HepG2 (cell line): ENCODE measurements at regions of chr11 and their contacts with region 1.

Region 1: DNA sequence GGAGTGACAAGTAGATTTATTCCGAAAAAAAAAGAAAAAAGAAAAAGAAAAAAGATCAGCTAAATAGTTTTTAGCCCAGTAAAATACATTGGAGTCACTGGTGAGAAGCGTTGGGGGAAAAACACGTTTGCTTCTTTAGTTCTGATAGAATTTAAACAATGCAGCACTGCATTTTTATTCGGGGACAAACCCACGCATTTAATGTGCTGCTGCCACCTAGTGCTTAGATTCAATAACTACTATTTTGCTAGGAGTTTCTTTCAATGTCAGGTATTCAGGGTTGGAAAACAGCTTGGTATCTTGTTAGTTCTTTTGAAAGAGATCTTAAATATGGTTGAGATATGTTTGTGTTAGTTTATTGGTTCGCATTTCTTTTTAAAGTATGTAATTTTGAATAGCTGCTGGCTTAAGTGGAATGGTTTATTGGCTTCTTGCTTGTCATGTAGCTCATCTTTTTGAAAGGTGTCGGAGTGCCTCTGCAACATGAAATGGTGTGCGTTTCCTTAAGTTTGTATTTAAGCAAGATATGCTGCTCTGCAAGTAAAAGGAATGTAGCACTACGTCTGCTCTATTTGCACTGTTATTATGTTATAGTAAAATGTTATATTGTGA is 41.9 kb downstream of the SVIP start:
- DNase-seq: peak; percentile 45
- ATAC-seq: peak; percentile 63
- H3K4me3 ChIP-seq: no peak overlapping the region
- H3K27ac ChIP-seq: no peak overlapping the region
- H3K4me1 ChIP-seq: peaks cover 15% of the 10 kb centered on the region
- H3K27me3 ChIP-seq: no peaks in the 10 kb centered on the region
- CTCF ChIP-seq: peak; percentile 73
- EP300 ChIP-seq: no peak
- POLR2A ChIP-seq: no peak
- RAD21 ChIP-seq: peak; percentile 48

Region 2: GRCh38 chr11:22539821-22540256 is 247.8 kb before region 1 on chr11:
- CTCF ChIA-PET with region 1: no interaction called
- POLR2A ChIA-PET with region 1: no interaction called
- in situ Hi-C with region 1: no loop called
- intact Hi-C with region 1: loop called (anchors 1 kb)
- DNase-seq: peak; percentile 9
- ATAC-seq: peak; percentile 76
- H3K4me3 ChIP-seq: no peak overlapping the region
- H3K27ac ChIP-seq: no peak overlapping the region
- H3K4me1 ChIP-seq: no peaks in the 10 kb centered on the region
- H3K27me3 ChIP-seq: no peaks in the 10 kb centered on the region
- CTCF ChIP-seq: peak; percentile 52
- EP300 ChIP-seq: no peak
- POLR2A ChIP-seq: no peak
- RAD21 ChIP-seq: no peak

Region 3: GRCh38 chr11:22634897-22635629 is 152.6 kb before region 1 on chr11:
- CTCF ChIA-PET with region 1: interaction called, 4 read pairs
- POLR2A ChIA-PET with region 1: interaction called, 4 read pairs
- in situ Hi-C with region 1: no loop called
- intact Hi-C with region 1: loop called (anchors 1 kb)
- DNase-seq: peak; percentile 96
- ATAC-seq: peak; percentile 97
- H3K4me3 ChIP-seq: peak overlapping the region in 2 of 3 experiments; percentile 17 to 60; a peak in 3 of 6 replicates
- H3K27ac ChIP-seq: peak overlapping the region; percentile 76
- H3K4me1 ChIP-seq: peaks cover 34% of the 10 kb centered on the region
- H3K27me3 ChIP-seq: no peaks in the 10 kb centered on the region
- CTCF ChIP-seq: no peak
- EP300 ChIP-seq: peak; percentile 47 to 77; a peak in 3 of 4 replicates
- POLR2A ChIP-seq: peak in 1 of 2 experiments; percentile 58; a peak in 3 of 4 replicates
- RAD21 ChIP-seq: no peak

Region 4: GRCh38 chr11:22674470-22675439 is 112.9 kb before region 1 on chr11:
- CTCF ChIA-PET with region 1: interaction called, 4 read pairs
- POLR2A ChIA-PET with region 1: interaction called, 5 read pairs
- in situ Hi-C with region 1: loop called (anchors 5 kb)
- intact Hi-C with region 1: loop called (anchors 2 kb)
- DNase-seq: peak; percentile 93
- ATAC-seq: peak; percentile 97
- H3K4me3 ChIP-seq: peak overlapping the region; percentile 42 to 63 (median 44)
- H3K27ac ChIP-seq: peak overlapping the region; percentile 98
- H3K4me1 ChIP-seq: peaks cover 95% of the 10 kb centered on the region
- H3K27me3 ChIP-seq: no peaks in the 10 kb centered on the region
- CTCF ChIP-seq: no peak
- EP300 ChIP-seq: peak in 1 of 2 experiments; percentile 87; a peak in 2 of 4 replicates
- POLR2A ChIP-seq: peak; percentile 33 to 36; a peak in 1 of 4 replicates
- RAD21 ChIP-seq: no peak

Region 5: GRCh38 chr11:22763166-22763565 is 24.5 kb before region 1 on chr11:
- CTCF ChIA-PET with region 1: no interaction called
- POLR2A ChIA-PET with region 1: no interaction called
- in situ Hi-C with region 1: no loop called
- intact Hi-C with region 1: no loop called
- DNase-seq: no peak
- ATAC-seq: no peak
- H3K4me3 ChIP-seq: no peak overlapping the region
- H3K27ac ChIP-seq: no peak overlapping the region
- H3K4me1 ChIP-seq: no peaks in the 10 kb centered on the region
- H3K27me3 ChIP-seq: no peaks in the 10 kb centered on the region
- CTCF ChIP-seq: no peak
- EP300 ChIP-seq: no peak
- POLR2A ChIP-seq: no peak
- RAD21 ChIP-seq: no peak

Region 6: DNA sequence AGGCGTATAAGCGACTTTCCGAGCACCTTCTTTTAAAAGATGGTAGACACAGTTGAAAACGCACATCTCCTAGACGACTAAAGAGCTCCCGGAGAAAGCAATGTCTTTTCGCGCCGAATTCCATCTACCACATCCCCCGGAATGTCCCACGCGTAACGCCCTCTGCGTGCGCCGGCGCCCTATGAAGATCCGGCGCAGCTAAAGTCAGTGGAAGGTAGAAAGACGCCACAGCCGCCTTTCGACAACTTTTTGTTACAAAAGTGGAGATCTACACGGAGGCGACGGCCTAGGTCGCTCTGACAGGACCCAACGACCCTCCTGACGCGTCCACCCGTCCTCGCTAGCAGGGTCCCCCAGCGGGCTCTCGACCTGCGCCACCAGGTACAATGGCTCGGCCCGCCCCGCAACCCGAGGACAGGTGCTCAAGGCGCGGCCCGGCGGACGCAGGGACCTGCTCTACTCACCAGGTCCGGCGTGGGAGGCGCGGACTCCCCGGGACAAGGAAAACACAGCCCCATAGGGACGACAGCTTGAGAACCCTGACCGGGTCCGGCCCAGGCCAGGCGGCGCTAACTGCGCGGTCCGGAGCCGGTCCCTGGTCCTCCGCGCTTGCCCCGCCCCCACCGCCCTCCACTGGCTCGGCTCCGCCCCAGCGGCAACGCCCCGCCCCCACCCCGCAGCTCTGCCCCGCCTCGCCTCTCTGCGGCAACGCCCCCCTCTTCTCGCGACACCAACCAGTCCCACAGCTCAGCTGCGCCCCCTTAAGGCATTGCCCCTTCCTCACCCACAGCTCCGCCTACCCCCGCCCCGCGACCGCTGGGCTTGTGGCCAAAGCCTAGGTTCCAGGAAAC is 41.8 kb after region 1 on chr11 and contains the start of gene SVIP:
- CTCF ChIA-PET with region 1: no interaction called
- POLR2A ChIA-PET with region 1: interaction called, 8 read pairs
- in situ Hi-C with region 1: no loop called
- intact Hi-C with region 1: loop called (anchors 5 kb)
- DNase-seq: peak; percentile 87
- ATAC-seq: peak; percentile 94
- H3K4me3 ChIP-seq: peak within 1 kb of the TSS; percentile 78 to 99 (median 82)
- H3K27ac ChIP-seq: peak within 1 kb of the TSS; percentile 89
- H3K4me1 ChIP-seq: peaks cover 44% of the 10 kb centered on the region
- H3K27me3 ChIP-seq: no peaks in the 10 kb centered on the region; a peak in 1 of 5 replicates
- CTCF ChIP-seq: peak; percentile 91
- EP300 ChIP-seq: peak in 1 of 2 experiments; percentile 38; a peak in 1 of 4 replicates
- POLR2A ChIP-seq: peak; percentile 84
- RAD21 ChIP-seq: no peak
- total RNA-seq, gene SVIP: 27.2 and 31.1 TPM in 2 replicates